ENCODE measurements at regions of chr5 and their contacts with region 1.

Region 1: GRCh38 chr5:115147052-115147451 is 22.7 kb downstream of the TRIM36 start:
- DNase-seq: no peak
- ATAC-seq: no peak
- H3K4me3 Mint-ChIP-seq: no peak overlapping the region
- H3K27ac Mint-ChIP-seq: no peak overlapping the region
- H3K4me1 Mint-ChIP-seq: no peaks in the 10 kb centered on the region
- H3K27me3 Mint-ChIP-seq: peaks cover 5% of the 10 kb centered on the region
- CTCF ChIP-seq: no peak

Region 2: DNA sequence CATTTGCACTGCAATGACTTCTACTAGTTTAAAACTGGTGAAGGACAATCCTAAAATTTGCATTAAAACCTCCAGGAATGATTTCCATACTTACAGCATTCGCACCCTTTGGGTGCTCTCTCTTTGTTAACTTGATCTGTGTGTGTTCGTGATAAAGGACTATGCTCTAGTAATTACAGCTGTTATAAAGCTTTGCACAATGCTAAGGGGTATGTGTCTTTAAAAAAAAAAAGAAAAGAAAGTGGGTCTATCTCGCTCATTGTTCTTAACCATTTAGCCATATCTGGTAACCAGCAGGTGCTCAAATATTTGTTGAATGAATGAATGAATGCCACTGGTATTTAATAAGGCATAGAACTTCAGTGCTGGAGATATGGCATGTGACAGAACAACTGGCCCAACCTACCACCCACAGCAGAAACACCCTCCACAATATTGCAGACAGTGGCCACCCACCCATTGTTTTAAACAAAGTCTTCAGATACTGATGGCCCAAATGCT is 14.0 kb after region 1 on chr5:
- CTCF ChIA-PET with region 1: no interaction called
- POLR2A ChIA-PET with region 1: no interaction called
- intact Hi-C with region 1: loop called (anchors 2 kb)
- DNase-seq: no peak
- ATAC-seq: no peak
- H3K4me3 Mint-ChIP-seq: no peak overlapping the region
- H3K27ac Mint-ChIP-seq: no peak overlapping the region
- H3K4me1 Mint-ChIP-seq: no peaks in the 10 kb centered on the region
- H3K27me3 Mint-ChIP-seq: peaks cover 7% of the 10 kb centered on the region
- CTCF ChIP-seq: no peak

Region 3: GRCh38 chr5:115284021-115284420 is 137.0 kb after region 1 on chr5:
- CTCF ChIA-PET with region 1: no interaction called
- POLR2A ChIA-PET with region 1: no interaction called
- intact Hi-C with region 1: no loop called
- DNase-seq: no peak
- ATAC-seq: no peak
- H3K4me3 Mint-ChIP-seq: no peak overlapping the region
- H3K27ac Mint-ChIP-seq: no peak overlapping the region
- H3K4me1 Mint-ChIP-seq: peaks cover 2% of the 10 kb centered on the region
- H3K27me3 Mint-ChIP-seq: no peaks in the 10 kb centered on the region
- CTCF ChIP-seq: no peak

Region 4: GRCh38 chr5:115435778-115436712 is 289.0 kb after region 1 on chr5:
- CTCF ChIA-PET with region 1: no interaction called
- POLR2A ChIA-PET with region 1: no interaction called
- intact Hi-C with region 1: no loop called
- DNase-seq: no peak
- ATAC-seq: no peak
- H3K4me3 Mint-ChIP-seq: no peak overlapping the region
- H3K27ac Mint-ChIP-seq: no peak overlapping the region
- H3K4me1 Mint-ChIP-seq: no peaks in the 10 kb centered on the region
- H3K27me3 Mint-ChIP-seq: peaks cover 5% of the 10 kb centered on the region
- CTCF ChIP-seq: no peak